Activated B cell treated with CpG ODN at 0.5 μM for 24 hours (primary cell): ENCODE measurements at regions of chr17 and their contacts with region 1.

Region 1: DNA sequence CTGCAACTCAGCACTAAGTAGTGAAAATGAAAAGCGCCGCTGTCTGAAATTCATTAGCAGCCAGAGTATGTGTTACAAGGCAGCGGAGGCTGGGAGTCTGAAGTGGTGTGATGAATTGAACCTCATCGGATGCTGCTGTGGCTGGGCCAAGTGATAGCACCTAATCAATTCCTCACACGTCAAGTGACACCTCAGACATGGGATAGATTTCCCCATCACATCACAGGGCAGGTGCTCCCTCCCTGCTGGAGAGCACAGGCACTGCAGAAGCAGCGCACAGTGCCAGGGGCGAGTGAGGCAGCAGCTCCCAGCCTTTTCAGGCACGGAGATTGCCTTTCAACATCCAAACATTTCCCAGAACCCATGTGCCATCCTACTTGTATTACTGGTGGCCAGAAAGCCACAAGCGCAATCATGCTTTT is 32.2 kb downstream of the DRC3 start:
- DNase-seq: no peak
- ATAC-seq: no peak
- H3K4me3 Mint-ChIP-seq: no peak overlapping the region
- H3K27ac Mint-ChIP-seq: no peak overlapping the region
- H3K4me1 Mint-ChIP-seq: peaks cover 9% of the 10 kb centered on the region
- H3K27me3 Mint-ChIP-seq: no peaks in the 10 kb centered on the region
- CTCF ChIP-seq: no peak

Region 2: GRCh38 chr17:16676676-16677268 is 1328.1 kb before region 1 on chr17:
- CTCF ChIA-PET with region 1: no interaction called
- POLR2A ChIA-PET with region 1: interaction called, 12 read pairs
- intact Hi-C with region 1: no loop called
- DNase-seq: no peak
- ATAC-seq: no peak
- H3K4me3 Mint-ChIP-seq: no peak overlapping the region
- H3K27ac Mint-ChIP-seq: no peak overlapping the region
- H3K4me1 Mint-ChIP-seq: no peaks in the 10 kb centered on the region
- H3K27me3 Mint-ChIP-seq: peaks cover 13% of the 10 kb centered on the region
- CTCF ChIP-seq: no peak

Region 3: GRCh38 chr17:17535957-17536356 is 468.9 kb before region 1 on chr17:
- CTCF ChIA-PET with region 1: no interaction called
- POLR2A ChIA-PET with region 1: no interaction called
- intact Hi-C with region 1: no loop called
- DNase-seq: no peak
- ATAC-seq: no peak
- H3K4me3 Mint-ChIP-seq: no peak overlapping the region
- H3K27ac Mint-ChIP-seq: no peak overlapping the region
- H3K4me1 Mint-ChIP-seq: no peaks in the 10 kb centered on the region
- H3K27me3 Mint-ChIP-seq: no peaks in the 10 kb centered on the region
- CTCF ChIP-seq: no peak

Region 4: DNA sequence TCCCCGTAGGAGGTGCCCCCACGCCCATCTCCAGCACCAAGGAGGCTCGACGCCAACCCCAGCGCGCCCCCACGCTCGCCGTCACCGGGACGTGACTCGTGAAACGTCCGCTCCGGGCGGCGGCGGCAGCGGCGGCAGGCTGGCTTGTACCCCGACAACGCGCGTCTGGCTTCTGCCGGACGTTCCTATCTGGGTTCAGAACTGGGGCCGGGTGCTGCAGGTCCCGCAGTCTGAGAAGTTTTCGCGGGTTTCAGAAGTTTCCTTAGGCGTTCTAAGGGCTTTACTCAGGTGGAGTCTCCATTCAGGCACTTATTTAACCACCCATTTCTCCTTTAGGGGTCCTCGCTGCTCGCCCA is 178.1 kb after region 1 on chr17:
- CTCF ChIA-PET with region 1: no interaction called
- POLR2A ChIA-PET with region 1: no interaction called
- intact Hi-C with region 1: no loop called
- DNase-seq: peak; percentile 81
- ATAC-seq: peak; percentile 43
- H3K4me3 Mint-ChIP-seq: peak overlapping the region; percentile 98
- H3K27ac Mint-ChIP-seq: peak overlapping the region; percentile 99
- H3K4me1 Mint-ChIP-seq: peaks cover 41% of the 10 kb centered on the region
- H3K27me3 Mint-ChIP-seq: no peaks in the 10 kb centered on the region
- CTCF ChIP-seq: no peak